ENCODE measurements at regions of chr13 and their contacts with region 1.

Region 1: GRCh38 chr13:23020223-23020843 is 160.4 kb upstream of the SGCG start:
- DNase-seq: peak in 1 of 2 donors; percentile 64
- H3K4me3 ChIP-seq: no peak overlapping the region
- H3K27ac ChIP-seq: no peak overlapping the region
- H3K4me1 ChIP-seq: no peaks in the 10 kb centered on the region
- H3K27me3 ChIP-seq: no peaks in the 10 kb centered on the region
- CTCF ChIP-seq: peak; percentile 17 to 69 (median 68)

Region 2: DNA sequence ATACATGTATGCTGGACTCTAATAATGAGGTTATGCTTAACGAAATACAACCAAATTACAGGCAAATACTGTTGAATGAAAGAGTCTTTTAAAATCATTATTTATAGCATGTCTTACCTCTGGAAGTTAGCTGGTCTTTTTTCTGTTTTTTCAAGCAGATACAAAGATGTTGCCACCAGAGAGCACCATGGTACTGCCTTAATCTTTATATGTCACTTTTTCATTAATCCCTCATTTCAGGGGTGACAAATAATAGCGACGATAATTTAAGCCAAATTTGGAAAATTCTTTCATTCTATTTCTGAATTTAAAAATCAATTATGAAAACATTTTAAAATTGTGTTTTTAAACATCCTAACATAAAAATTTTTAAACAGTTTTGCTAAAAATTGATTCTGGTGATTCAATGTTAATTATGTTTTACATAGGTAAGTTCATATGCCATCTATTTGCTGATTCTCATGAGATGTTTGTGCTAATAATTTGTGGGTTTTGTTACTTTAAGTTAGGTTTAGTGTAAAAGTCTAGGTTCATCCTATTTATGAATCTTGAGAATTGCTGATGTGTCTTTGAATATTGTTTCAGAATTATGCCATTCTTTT is 218.8 kb before region 1 on chr13:
- intact Hi-C with region 1: loop called (anchors 2 kb)
- DNase-seq: no peak
- H3K4me3 ChIP-seq: no peak overlapping the region
- H3K27ac ChIP-seq: no peak overlapping the region
- H3K4me1 ChIP-seq: no peaks in the 10 kb centered on the region
- H3K27me3 ChIP-seq: no peaks in the 10 kb centered on the region
- CTCF ChIP-seq: peak in 2 of 3 experiments; percentile 9 to 14

Region 3: GRCh38 chr13:22993148-22993547 is 27.2 kb before region 1 on chr13:
- intact Hi-C with region 1: no loop called
- DNase-seq: no peak
- H3K4me3 ChIP-seq: no peak overlapping the region
- H3K27ac ChIP-seq: no peak overlapping the region
- H3K4me1 ChIP-seq: no peaks in the 10 kb centered on the region
- H3K27me3 ChIP-seq: no peaks in the 10 kb centered on the region
- CTCF ChIP-seq: no peak

Measured in ascending aorta (tissue), 2 donors.